ENCODE measurements at regions of chr1 and their contacts with region 1.

Region 1: GRCh38 chr1:66253330-66253921 is 280.5 kb upstream of the SGIP1 start:
- DNase-seq: no peak
- ATAC-seq: peak; percentile 93 to 96 (median 96)
- H3K4me3 ChIP-seq: no peak overlapping the region
- H3K27ac ChIP-seq: no peak overlapping the region
- H3K4me1 ChIP-seq: no peaks in the 10 kb centered on the region
- H3K27me3 ChIP-seq: no peaks in the 10 kb centered on the region
- CTCF ChIP-seq: peak; percentile 79 to 91 (median 80)
- POLR2A ChIP-seq: no peak

Region 2: GRCh38 chr1:66022904-66023620 is 230.4 kb before region 1 on chr1:
- intact Hi-C with region 1: no loop called
- DNase-seq: no peak
- ATAC-seq: no peak
- H3K4me3 ChIP-seq: no peak overlapping the region
- H3K27ac ChIP-seq: no peak overlapping the region
- H3K4me1 ChIP-seq: no peaks in the 10 kb centered on the region
- H3K27me3 ChIP-seq: no peaks in the 10 kb centered on the region
- CTCF ChIP-seq: no peak
- POLR2A ChIP-seq: no peak

Region 3: GRCh38 chr1:66090859-66091457 is 162.5 kb before region 1 on chr1:
- intact Hi-C with region 1: no loop called
- DNase-seq: no peak
- ATAC-seq: no peak
- H3K4me3 ChIP-seq: no peak overlapping the region
- H3K27ac ChIP-seq: no peak overlapping the region
- H3K4me1 ChIP-seq: no peaks in the 10 kb centered on the region
- H3K27me3 ChIP-seq: no peaks in the 10 kb centered on the region
- CTCF ChIP-seq: no peak
- POLR2A ChIP-seq: no peak

Region 4: GRCh38 chr1:66446261-66447001 is 193.0 kb after region 1 on chr1:
- intact Hi-C with region 1: loop called (anchors 5 kb)
- DNase-seq: no peak
- ATAC-seq: peak; percentile 91 to 93 (median 93)
- H3K4me3 ChIP-seq: no peak overlapping the region
- H3K27ac ChIP-seq: no peak overlapping the region
- H3K4me1 ChIP-seq: no peaks in the 10 kb centered on the region
- H3K27me3 ChIP-seq: no peaks in the 10 kb centered on the region
- CTCF ChIP-seq: peak; percentile 85 to 93 (median 88)
- POLR2A ChIP-seq: no peak

Region 5: GRCh38 chr1:66648901-66649595 is 395.6 kb after region 1 on chr1:
- intact Hi-C with region 1: loop called in 1 of 2 experiments (anchors 10 kb)
- DNase-seq: no peak
- ATAC-seq: peak in 2 of 4 donors; percentile 17 to 29
- H3K4me3 ChIP-seq: no peak overlapping the region
- H3K27ac ChIP-seq: no peak overlapping the region
- H3K4me1 ChIP-seq: no peaks in the 10 kb centered on the region
- H3K27me3 ChIP-seq: no peaks in the 10 kb centered on the region
- CTCF ChIP-seq: no peak
- POLR2A ChIP-seq: no peak

Measured in right lobe of liver (tissue), 6 donors.